ENCODE measurements at regions of chr3 and their contacts with region 1.

Region 1: DNA sequence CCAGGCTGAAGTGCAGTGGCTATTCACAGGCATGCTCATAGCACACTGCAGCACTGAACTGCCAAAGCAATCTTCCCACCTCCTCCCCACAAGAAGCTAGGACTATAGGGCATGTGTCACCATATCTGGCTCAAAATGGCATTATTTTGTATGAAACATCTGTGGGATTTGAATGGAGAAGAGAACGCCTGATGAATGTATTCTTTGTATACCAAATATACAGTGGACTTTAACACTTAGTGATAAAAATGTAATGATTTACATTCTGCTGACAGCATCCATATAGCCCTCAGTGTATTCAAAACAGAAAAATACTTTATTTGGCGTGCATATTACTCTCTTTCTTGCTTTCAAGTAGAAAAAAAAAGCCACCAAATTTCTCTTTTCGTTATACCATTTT is 257.8 kb downstream of the FOXP1 start:
- DNase-seq: no peak
- ATAC-seq: no peak
- H3K4me3 ChIP-seq: no peak overlapping the region
- H3K4me3 Mint-ChIP-seq: no peak overlapping the region
- H3K27ac ChIP-seq: no peak overlapping the region
- H3K27ac Mint-ChIP-seq: no peak overlapping the region
- H3K4me1 ChIP-seq: no peaks in the 10 kb centered on the region
- H3K4me1 Mint-ChIP-seq: peaks cover 35% of the 10 kb centered on the region
- H3K27me3 ChIP-seq: no peaks in the 10 kb centered on the region
- H3K27me3 Mint-ChIP-seq: no peaks in the 10 kb centered on the region
- CTCF ChIP-seq: no peak

Region 2: DNA sequence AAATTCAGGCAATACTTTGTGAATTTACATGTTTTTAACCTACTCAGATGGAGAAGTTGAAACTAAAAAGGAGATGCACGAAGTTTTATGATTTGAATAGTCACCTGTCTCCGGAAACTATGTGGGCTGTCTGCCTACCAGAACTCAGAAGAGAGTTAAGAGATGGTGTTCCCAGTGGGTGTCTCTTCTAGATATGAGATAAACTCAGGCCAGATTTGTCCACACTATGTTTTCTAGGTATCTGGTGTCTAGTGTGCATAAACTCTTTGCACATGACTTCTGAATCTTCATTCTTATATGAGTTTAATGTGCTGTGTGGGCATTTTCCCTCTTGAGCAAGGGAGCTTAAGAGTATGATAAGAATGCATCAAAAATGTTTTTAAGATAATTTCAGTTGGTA is 35.0 kb after region 1 on chr3:
- CTCF ChIA-PET with region 1: no interaction called
- POLR2A ChIA-PET with region 1: no interaction called
- intact Hi-C with region 1: loop called in 1 of 2 experiments (anchors 5 kb)
- DNase-seq: peak in 1 of 9 experiments; percentile 40
- ATAC-seq: peak; percentile 50
- H3K4me3 ChIP-seq: no peak overlapping the region
- H3K4me3 Mint-ChIP-seq: peak overlapping the region; percentile 64
- H3K27ac ChIP-seq: peak overlapping the region in 1 of 2 experiments; percentile 34
- H3K27ac Mint-ChIP-seq: peak overlapping the region; percentile 83
- H3K4me1 ChIP-seq: peaks cover 72% of the 10 kb centered on the region
- H3K4me1 Mint-ChIP-seq: peaks cover 82% of the 10 kb centered on the region
- H3K27me3 ChIP-seq: no peaks in the 10 kb centered on the region
- H3K27me3 Mint-ChIP-seq: no peaks in the 10 kb centered on the region
- CTCF ChIP-seq: no peak